GM12878 (cell line): ENCODE measurements at regions of chr7 and their contacts with region 1.

Region 1: GRCh38 chr7:150435390-150436073 is 14.9 kb upstream of the GIMAP8 start:
- DNase-seq: peak; percentile 97
- ATAC-seq: peak; percentile 90
- H3K4me3 ChIP-seq: peak overlapping the region; percentile 74
- H3K27ac ChIP-seq: peak overlapping the region; percentile 100
- H3K4me1 ChIP-seq: peaks cover 29% of the 10 kb centered on the region
- H3K27me3 ChIP-seq: no peaks in the 10 kb centered on the region
- CTCF ChIP-seq: no peak
- EP300 ChIP-seq: peak; percentile 82 to 89
- POLR2A ChIP-seq: peak; percentile 64
- RAD21 ChIP-seq: no peak

Region 2: GRCh38 chr7:150378853-150379440 is 56.6 kb before region 1 on chr7 and contains the start of gene ZNF775:
- CTCF ChIA-PET with region 1: interaction called, 14 read pairs
- POLR2A ChIA-PET with region 1: interaction called, 6 read pairs
- RAD21 ChIA-PET with region 1: interaction called, 6 read pairs
- SMC1A ChIA-PET with region 1: interaction called, 11 read pairs
- in situ Hi-C with region 1: no loop called
- intact Hi-C with region 1: no loop called
- DNase-seq: no peak
- ATAC-seq: peak; percentile 87
- H3K4me3 ChIP-seq: peak within 1 kb of the TSS; percentile 99
- H3K27ac ChIP-seq: peak within 1 kb of the TSS; percentile 97
- H3K4me1 ChIP-seq: peaks cover 75% of the 10 kb centered on the region
- H3K27me3 ChIP-seq: no peaks in the 10 kb centered on the region
- CTCF ChIP-seq: no peak
- EP300 ChIP-seq: no peak
- POLR2A ChIP-seq: peak; percentile 93
- RAD21 ChIP-seq: no peak
- polyA plus RNA-seq, gene ZNF775: 0.05 to 0.46 TPM

Region 3: GRCh38 chr7:150404805-150405583 is 30.5 kb before region 1 on chr7:
- CTCF ChIA-PET with region 1: interaction called, 21 read pairs
- POLR2A ChIA-PET with region 1: interaction called, 11 read pairs
- RAD21 ChIA-PET with region 1: interaction called, 22 read pairs
- SMC1A ChIA-PET with region 1: interaction called, 19 read pairs
- in situ Hi-C with region 1: no loop called
- intact Hi-C with region 1: no loop called
- DNase-seq: no peak
- ATAC-seq: peak; percentile 62
- H3K4me3 ChIP-seq: peak overlapping the region; percentile 91
- H3K27ac ChIP-seq: peak overlapping the region; percentile 89
- H3K4me1 ChIP-seq: peaks cover 58% of the 10 kb centered on the region
- H3K27me3 ChIP-seq: no peaks in the 10 kb centered on the region
- CTCF ChIP-seq: peak; percentile 13 to 39 (median 19); a peak in 4 of 6 replicates
- EP300 ChIP-seq: peak in 1 of 2 experiments; percentile 53; a peak in 1 of 4 replicates
- POLR2A ChIP-seq: peak; percentile 94
- RAD21 ChIP-seq: no peak

Region 4: DNA sequence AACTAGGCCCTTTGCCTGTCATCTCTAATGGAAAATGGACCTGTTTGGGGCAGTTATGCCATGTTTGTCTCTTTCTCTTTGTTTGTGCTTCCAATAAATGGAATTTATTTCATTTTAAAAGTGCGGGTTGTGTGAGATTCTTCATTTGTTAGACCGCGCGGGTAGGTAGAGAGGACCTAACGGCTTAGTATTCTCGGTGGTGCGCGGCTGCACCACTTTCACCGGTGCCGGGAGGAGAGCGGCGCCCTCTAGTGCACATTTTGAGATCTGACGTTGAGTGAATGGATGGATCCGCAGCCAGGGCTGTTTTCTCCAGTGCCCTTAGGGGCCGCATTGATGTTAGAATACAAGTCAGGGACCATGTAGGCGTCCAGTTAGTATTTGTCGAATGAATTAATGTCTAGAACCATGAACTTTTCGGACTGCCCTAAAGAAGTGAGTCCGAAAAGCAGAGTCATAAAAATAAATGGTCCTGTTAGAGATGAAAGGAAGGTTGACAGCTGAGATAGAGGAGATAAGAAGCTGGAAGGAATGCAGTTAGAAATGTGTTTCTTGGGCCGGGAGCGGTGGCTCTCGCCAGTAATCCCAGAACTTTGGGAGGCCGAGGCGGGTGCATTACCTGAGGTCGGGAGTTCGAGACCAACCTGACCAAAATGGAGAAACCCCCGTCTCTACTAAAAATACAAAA is 14.4 kb before region 1 on chr7:
- CTCF ChIA-PET with region 1: interaction called, 16 read pairs
- POLR2A ChIA-PET with region 1: interaction called, 3 read pairs
- RAD21 ChIA-PET with region 1: interaction called, 11 read pairs
- SMC1A ChIA-PET with region 1: interaction called, 12 read pairs
- in situ Hi-C with region 1: no loop called
- intact Hi-C with region 1: no loop called
- DNase-seq: no peak
- ATAC-seq: peak; percentile 100
- H3K4me3 ChIP-seq: no peak overlapping the region
- H3K27ac ChIP-seq: no peak overlapping the region
- H3K4me1 ChIP-seq: peaks cover 2% of the 10 kb centered on the region; the same call in 1 of the 2 replicates
- H3K27me3 ChIP-seq: no peaks in the 10 kb centered on the region
- CTCF ChIP-seq: peak; percentile 86 to 95 (median 88); a peak in 5 of 6 replicates
- EP300 ChIP-seq: no peak
- POLR2A ChIP-seq: no peak
- RAD21 ChIP-seq: peak; percentile 94

Region 5: DNA sequence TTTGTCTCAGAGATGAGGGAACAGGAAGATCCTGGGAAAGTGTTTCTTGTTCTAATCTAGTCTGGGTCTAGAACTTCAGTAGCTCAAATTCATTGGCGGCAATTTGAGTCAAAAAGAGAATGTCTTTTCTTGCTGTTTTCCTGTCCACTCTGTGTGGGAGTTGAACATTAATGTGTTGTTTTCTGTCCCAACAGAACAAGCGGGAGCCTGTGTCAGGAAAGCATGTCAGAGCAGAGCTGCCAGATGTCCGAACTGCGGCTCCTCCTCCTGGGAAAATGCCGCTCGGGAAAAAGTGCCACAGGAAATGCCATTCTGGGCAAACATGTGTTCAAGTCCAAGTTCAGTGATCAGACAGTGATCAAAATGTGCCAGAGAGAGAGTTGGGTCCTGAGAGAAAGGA is 30.9 kb after region 1 on chr7:
- CTCF ChIA-PET with region 1: interaction called, 10 read pairs
- POLR2A ChIA-PET with region 1: no interaction called
- RAD21 ChIA-PET with region 1: no interaction called
- SMC1A ChIA-PET with region 1: no interaction called
- in situ Hi-C with region 1: no loop called
- intact Hi-C with region 1: no loop called
- DNase-seq: no peak
- ATAC-seq: no peak
- H3K4me3 ChIP-seq: no peak overlapping the region
- H3K27ac ChIP-seq: no peak overlapping the region
- H3K4me1 ChIP-seq: no peaks in the 10 kb centered on the region
- H3K27me3 ChIP-seq: no peaks in the 10 kb centered on the region
- CTCF ChIP-seq: no peak
- EP300 ChIP-seq: no peak
- POLR2A ChIP-seq: no peak
- RAD21 ChIP-seq: no peak